ENCODE measurements at regions of chr6 and their contacts with region 1.

Region 1: GRCh38 chr6:82270881-82271645 is 23.5 kb upstream of the IBTK start:
- DNase-seq: no peak
- H3K4me3 Mint-ChIP-seq: no peak overlapping the region
- H3K27ac Mint-ChIP-seq: no peak overlapping the region
- H3K4me1 Mint-ChIP-seq: peaks cover 2% of the 10 kb centered on the region
- H3K27me3 Mint-ChIP-seq: no peaks in the 10 kb centered on the region

Region 2: GRCh38 chr6:81929828-81930227 is 341.2 kb before region 1 on chr6:
- CTCF ChIA-PET with region 1: no interaction called
- POLR2A ChIA-PET with region 1: no interaction called
- intact Hi-C with region 1: no loop called
- DNase-seq: no peak
- H3K4me3 Mint-ChIP-seq: no peak overlapping the region
- H3K27ac Mint-ChIP-seq: no peak overlapping the region
- H3K4me1 Mint-ChIP-seq: no peaks in the 10 kb centered on the region
- H3K27me3 Mint-ChIP-seq: no peaks in the 10 kb centered on the region

Region 3: GRCh38 chr6:82205930-82206392 is 65.1 kb before region 1 on chr6:
- CTCF ChIA-PET with region 1: no interaction called
- POLR2A ChIA-PET with region 1: no interaction called
- intact Hi-C with region 1: no loop called
- DNase-seq: no peak
- H3K4me3 Mint-ChIP-seq: no peak overlapping the region
- H3K27ac Mint-ChIP-seq: no peak overlapping the region
- H3K4me1 Mint-ChIP-seq: peaks cover 9% of the 10 kb centered on the region
- H3K27me3 Mint-ChIP-seq: no peaks in the 10 kb centered on the region

Region 4: GRCh38 chr6:82247634-82248232 is 23.3 kb before region 1 on chr6 and contains the start of gene IBTK:
- CTCF ChIA-PET with region 1: interaction called, 10 read pairs
- POLR2A ChIA-PET with region 1: no interaction called
- intact Hi-C with region 1: no loop called
- DNase-seq: peak; percentile 95
- H3K4me3 Mint-ChIP-seq: peak within 1 kb of the TSS; percentile 89
- H3K27ac Mint-ChIP-seq: peak within 1 kb of the TSS; percentile 90
- H3K4me1 Mint-ChIP-seq: peaks cover 27% of the 10 kb centered on the region
- H3K27me3 Mint-ChIP-seq: no peaks in the 10 kb centered on the region
- total RNA-seq, gene IBTK: 30.7 to 32.1 TPM

Region 5: DNA sequence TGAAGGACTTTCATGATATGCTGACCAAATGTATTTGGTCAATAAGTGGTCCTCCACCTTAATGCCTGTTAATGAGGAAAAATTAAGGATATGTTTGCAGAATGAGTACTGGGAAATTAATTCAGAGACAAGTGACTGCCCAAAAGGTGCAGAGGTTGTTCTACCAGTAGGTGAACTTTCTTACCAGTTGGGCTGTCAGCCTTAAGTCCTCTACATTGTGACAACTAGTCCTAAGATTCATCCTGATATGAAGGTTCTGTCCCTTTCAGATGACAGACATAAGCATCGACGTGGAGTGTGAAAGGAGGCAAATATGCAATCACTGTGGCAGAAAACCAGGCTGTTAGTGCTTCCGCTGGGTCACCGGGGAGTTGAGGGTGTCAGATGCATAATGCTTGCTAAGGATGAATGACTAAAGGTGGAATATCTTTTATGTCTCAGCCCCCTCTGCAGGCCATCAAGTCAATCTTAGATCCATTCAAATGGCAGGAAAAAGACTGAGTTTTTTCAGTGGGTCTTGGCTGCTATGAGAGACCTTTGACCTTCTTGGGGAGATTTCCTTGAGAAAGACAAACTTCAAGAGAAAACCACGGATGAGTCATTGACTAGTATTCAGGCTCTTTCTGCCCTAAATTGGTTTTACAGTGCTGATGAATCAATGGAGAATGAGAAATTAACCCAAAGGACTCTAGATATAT is 318.6 kb after region 1 on chr6:
- CTCF ChIA-PET with region 1: no interaction called
- POLR2A ChIA-PET with region 1: no interaction called
- intact Hi-C with region 1: loop called (anchors 5 kb)
- DNase-seq: peak; percentile 9
- H3K4me3 Mint-ChIP-seq: no peak overlapping the region
- H3K27ac Mint-ChIP-seq: no peak overlapping the region
- H3K4me1 Mint-ChIP-seq: no peaks in the 10 kb centered on the region
- H3K27me3 Mint-ChIP-seq: peaks cover 4% of the 10 kb centered on the region

Region 6: GRCh38 chr6:83057705-83058321 is 786.8 kb after region 1 on chr6:
- CTCF ChIA-PET with region 1: interaction called, 14 read pairs
- POLR2A ChIA-PET with region 1: no interaction called
- intact Hi-C with region 1: loop called (anchors 1 kb)
- DNase-seq: peak; percentile 39
- H3K4me3 Mint-ChIP-seq: no peak overlapping the region
- H3K27ac Mint-ChIP-seq: no peak overlapping the region
- H3K4me1 Mint-ChIP-seq: peaks cover 5% of the 10 kb centered on the region
- H3K27me3 Mint-ChIP-seq: no peaks in the 10 kb centered on the region

Region 7: DNA sequence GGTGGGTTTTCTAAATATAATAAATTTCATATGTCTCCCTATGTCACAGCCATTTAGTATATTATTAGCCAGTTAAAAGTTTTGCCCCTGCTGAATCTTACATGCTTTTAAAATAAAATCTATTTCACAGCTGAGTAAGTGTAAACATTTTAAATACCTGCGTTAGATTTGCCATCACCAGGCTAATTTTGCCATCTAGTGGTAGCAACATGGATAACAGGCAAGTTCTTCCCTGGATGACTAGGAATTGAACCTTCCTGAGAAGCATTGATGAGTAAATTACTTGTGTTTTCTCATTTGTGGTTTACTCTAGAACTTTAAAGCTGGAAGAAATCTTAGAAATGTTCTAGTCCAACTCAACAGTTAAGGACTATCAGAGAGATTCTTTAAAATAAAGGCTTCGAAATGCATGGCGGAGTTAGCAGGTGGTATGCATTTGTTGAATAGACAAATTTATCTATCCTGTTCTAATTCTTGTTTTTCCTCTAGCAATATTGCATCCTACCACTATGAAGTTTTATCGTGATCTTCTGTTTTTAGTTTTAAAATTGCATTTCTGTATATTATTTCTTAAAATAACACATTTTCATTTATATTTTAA is 1243.9 kb after region 1 on chr6:
- CTCF ChIA-PET with region 1: no interaction called
- POLR2A ChIA-PET with region 1: no interaction called
- intact Hi-C with region 1: loop called (anchors 10 kb)
- DNase-seq: peak; percentile 10
- H3K4me3 Mint-ChIP-seq: no peak overlapping the region
- H3K27ac Mint-ChIP-seq: no peak overlapping the region
- H3K4me1 Mint-ChIP-seq: peaks cover 5% of the 10 kb centered on the region
- H3K27me3 Mint-ChIP-seq: peaks cover 27% of the 10 kb centered on the region

Measured in activated CD4-positive, alpha-beta memory T cell treated with anti-CD3 and anti-CD28 coated beads for 36 hours (primary cell).